Mammary epithelial cell (primary cell): ENCODE measurements at regions of chr17 and their contacts with region 1.

Region 1: GRCh38 chr17:36486204-36487194 is at the start of gene ZNHIT3:
- DNase-seq: peak; percentile 93
- H3K4me3 ChIP-seq: peak within 1 kb of the TSS; percentile 77 to 97 (median 85)
- H3K27ac ChIP-seq: peak within 1 kb of the TSS; percentile 36
- H3K4me1 ChIP-seq: peaks cover 24% of the 10 kb centered on the region
- H3K27me3 ChIP-seq: no peaks in the 10 kb centered on the region
- CTCF ChIP-seq: no peak
- total RNA-seq, gene ZNHIT3: 20.3 to 30.3 TPM

Region 2: DNA sequence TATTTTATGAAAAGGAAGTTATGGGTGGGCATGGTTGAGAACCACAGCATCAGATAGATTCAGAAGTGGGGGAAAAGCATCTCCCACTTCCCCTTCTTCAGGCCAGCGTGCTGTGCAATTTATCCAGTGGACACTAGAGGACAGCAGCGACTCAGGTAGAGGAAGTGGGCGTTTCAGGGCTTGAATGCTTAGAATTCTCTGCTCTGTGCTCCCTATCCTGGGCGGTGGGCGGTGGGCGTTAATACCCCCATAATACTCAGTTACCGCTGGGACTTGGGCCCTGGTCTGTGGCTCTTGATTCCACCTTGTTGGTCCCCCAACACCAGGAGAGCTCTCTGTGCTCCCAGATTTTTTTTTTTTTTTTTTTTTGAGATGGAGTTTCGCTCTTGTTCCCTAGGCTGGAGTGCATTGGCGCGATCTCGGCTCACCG is 539.3 kb before region 1 on chr17:
- CTCF ChIA-PET with region 1: no interaction called
- dilution Hi-C with region 1: no loop called
- in situ Hi-C with region 1: no loop called
- intact Hi-C with region 1: loop called (anchors 5 kb)
- DNase-seq: peak; percentile 31
- H3K4me3 ChIP-seq: peak overlapping the region; percentile 35 to 46 (median 38)
- H3K27ac ChIP-seq: no peak overlapping the region
- H3K4me1 ChIP-seq: no peaks in the 10 kb centered on the region
- H3K27me3 ChIP-seq: peaks cover 2% of the 10 kb centered on the region
- CTCF ChIP-seq: peak; percentile 86 to 95

Region 3: DNA sequence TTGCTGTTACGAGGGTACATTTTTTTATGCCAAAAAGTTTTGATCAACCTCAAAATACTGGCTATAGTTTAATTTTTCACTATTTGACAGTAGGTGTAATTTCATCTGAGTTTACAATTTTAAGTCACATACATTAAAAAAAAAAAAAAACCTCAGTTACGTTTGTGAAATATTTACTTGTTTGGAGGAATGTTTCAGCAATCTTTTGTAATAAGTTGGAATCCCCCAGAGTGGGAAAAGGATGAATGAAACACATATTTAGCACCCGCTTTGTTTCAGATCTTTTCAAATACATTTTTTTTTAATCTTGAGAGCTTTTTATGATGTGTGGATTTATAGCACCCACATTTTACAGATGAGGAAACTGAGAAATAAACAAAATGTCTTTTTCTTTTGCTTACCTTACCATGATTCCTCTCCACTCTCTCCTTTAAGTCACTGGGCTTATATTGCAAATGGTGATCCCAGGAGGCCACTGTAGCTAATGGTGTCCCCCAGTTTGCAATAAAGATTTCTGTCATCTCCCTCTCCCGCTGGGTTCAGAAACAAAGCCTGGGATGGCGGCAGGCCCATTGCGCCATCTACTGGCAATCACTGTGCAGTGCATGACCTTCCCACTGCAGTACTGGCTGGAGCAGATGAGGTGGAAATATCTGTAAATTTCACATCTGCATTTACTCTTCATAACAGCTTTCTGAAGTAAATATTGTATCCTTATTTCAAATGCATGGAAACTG is 337.8 kb before region 1 on chr17:
- CTCF ChIA-PET with region 1: no interaction called
- dilution Hi-C with region 1: no loop called
- in situ Hi-C with region 1: no loop called
- intact Hi-C with region 1: loop called (anchors 5 kb)
- DNase-seq: peak; percentile 24
- H3K4me3 ChIP-seq: no peak overlapping the region
- H3K27ac ChIP-seq: no peak overlapping the region
- H3K4me1 ChIP-seq: no peaks in the 10 kb centered on the region
- H3K27me3 ChIP-seq: peaks cover 2% of the 10 kb centered on the region
- CTCF ChIP-seq: peak; percentile 99

Region 4: GRCh38 chr17:36188891-36189306 is 297.6 kb before region 1 on chr17:
- CTCF ChIA-PET with region 1: interaction called, 11 read pairs
- dilution Hi-C with region 1: no loop called
- in situ Hi-C with region 1: loop called in 1 of 2 experiments (anchors 25 kb)
- intact Hi-C with region 1: no loop called
- DNase-seq: no peak
- H3K4me3 ChIP-seq: no peak overlapping the region
- H3K27ac ChIP-seq: no peak overlapping the region
- H3K4me1 ChIP-seq: no peaks in the 10 kb centered on the region
- H3K27me3 ChIP-seq: no peaks in the 10 kb centered on the region
- CTCF ChIP-seq: no peak

Region 5: DNA sequence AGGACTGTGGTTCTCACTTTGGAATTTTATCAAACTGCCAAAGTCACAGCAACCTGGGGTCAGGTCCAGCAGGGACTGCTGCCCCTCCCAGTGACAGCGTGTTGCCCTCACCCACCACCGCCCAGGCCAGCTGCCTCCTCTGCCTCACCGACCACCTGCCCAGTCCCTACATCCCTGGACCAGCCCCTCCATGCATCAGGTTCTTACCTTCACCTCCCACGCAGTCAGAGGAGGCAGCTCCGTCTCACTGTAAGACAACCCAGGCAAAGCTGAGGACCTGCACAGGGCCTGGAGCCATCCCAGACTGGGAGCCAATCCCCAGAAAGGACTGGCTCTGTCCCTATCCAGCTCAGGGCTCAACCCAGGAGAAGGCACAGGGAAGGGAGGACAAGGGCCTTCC is 29.2 kb before region 1 on chr17:
- CTCF ChIA-PET with region 1: no interaction called
- dilution Hi-C with region 1: no loop called
- in situ Hi-C with region 1: no loop called
- intact Hi-C with region 1: no loop called
- DNase-seq: no peak
- H3K4me3 ChIP-seq: no peak overlapping the region
- H3K27ac ChIP-seq: no peak overlapping the region
- H3K4me1 ChIP-seq: no peaks in the 10 kb centered on the region
- H3K27me3 ChIP-seq: peaks cover 2% of the 10 kb centered on the region
- CTCF ChIP-seq: no peak